ENCODE measurements at regions of chr5 and their contacts with region 1.

Region 1: GRCh38 chr5:16666883-16667398 is 50.1 kb upstream of the RETREG1 start:
- DNase-seq: peak; percentile 36
- H3K4me3 Mint-ChIP-seq: no peak overlapping the region
- H3K27ac Mint-ChIP-seq: no peak overlapping the region
- H3K4me1 Mint-ChIP-seq: no peaks in the 10 kb centered on the region
- H3K27me3 Mint-ChIP-seq: no peaks in the 10 kb centered on the region
- CTCF ChIP-seq: peak; percentile 34

Region 2: DNA sequence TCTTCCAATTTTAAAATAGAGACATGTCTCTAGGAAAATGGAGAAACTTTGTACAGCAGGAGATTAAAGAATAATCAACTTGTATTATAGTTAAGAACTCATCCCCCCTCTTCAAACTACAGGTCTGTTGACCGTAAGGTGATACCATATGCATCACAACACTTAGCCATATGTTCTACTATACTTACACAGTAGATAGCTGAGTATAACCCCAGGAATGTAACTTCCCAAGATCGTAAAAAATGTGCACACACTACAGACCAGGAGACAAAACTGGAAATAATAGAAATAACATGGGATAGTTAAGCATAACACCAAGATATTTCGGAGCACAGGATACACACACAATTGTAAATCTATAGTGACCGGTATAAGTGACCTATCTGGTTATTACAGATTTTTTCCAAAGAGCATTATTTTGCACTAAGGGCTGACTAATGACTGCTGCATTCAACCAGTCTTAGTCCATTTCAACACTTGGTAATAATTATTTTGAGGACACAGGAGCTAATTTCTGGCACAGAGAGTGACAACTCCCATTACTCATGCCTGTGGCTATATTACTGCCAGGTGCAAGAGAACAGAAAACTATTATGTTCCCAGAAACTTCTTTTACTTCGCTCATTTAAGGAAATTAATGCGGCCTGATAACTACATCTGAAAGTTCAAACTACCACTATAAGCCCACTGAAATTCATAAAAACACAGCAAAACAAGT is 186.0 kb before region 1 on chr5:
- CTCF ChIA-PET with region 1: interaction called, 22 read pairs
- POLR2A ChIA-PET with region 1: no interaction called
- intact Hi-C with region 1: no loop called
- DNase-seq: no peak
- H3K4me3 Mint-ChIP-seq: no peak overlapping the region
- H3K27ac Mint-ChIP-seq: no peak overlapping the region
- H3K4me1 Mint-ChIP-seq: peaks cover 12% of the 10 kb centered on the region
- H3K27me3 Mint-ChIP-seq: no peaks in the 10 kb centered on the region
- CTCF ChIP-seq: no peak

Region 3: DNA sequence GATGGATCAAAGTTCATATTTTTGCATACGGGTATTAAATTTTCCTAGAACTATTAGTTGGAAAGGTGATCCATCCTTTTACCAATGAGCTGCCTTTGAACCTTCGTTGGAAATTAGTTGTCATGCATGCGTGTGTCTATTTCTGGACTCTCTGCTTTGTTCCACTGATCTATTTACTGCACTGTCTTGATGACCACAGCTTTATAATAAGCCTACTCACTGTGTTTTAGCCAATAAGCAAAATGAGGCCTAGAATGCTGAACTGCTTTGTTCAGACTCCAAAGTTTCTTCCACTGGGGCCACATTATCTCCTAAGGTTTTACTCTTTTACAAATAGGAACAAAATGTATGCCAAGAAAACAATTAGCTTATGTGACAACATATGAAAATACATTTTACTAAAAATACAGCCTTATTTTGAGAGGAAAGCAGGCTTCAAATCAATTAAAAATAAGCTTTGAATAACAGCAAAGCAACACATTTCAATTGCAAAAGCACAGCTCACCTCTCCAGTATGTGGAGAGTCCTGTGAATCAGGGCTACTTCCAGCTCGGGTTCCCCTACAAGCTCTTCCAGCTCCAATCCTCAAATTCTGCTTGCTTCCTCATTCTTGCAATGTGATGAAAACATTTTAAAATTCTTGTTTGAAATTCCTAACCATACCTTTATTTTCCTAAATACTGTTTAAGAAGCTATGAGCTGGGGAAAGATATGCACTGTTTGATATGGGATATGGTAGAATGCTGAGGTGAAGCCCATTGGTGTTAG is 122.2 kb before region 1 on chr5:
- CTCF ChIA-PET with region 1: interaction called, 10 read pairs
- POLR2A ChIA-PET with region 1: no interaction called
- intact Hi-C with region 1: no loop called
- DNase-seq: no peak
- H3K4me3 Mint-ChIP-seq: no peak overlapping the region
- H3K27ac Mint-ChIP-seq: no peak overlapping the region
- H3K4me1 Mint-ChIP-seq: peaks cover 9% of the 10 kb centered on the region
- H3K27me3 Mint-ChIP-seq: no peaks in the 10 kb centered on the region
- CTCF ChIP-seq: no peak

Region 4: GRCh38 chr5:16656561-16657191 is 10.3 kb before region 1 on chr5:
- CTCF ChIA-PET with region 1: interaction called, 30 read pairs
- POLR2A ChIA-PET with region 1: no interaction called
- intact Hi-C with region 1: no loop called
- DNase-seq: peak; percentile 86
- H3K4me3 Mint-ChIP-seq: peak overlapping the region; percentile 30
- H3K27ac Mint-ChIP-seq: peak overlapping the region; percentile 89
- H3K4me1 Mint-ChIP-seq: peaks cover 18% of the 10 kb centered on the region
- H3K27me3 Mint-ChIP-seq: no peaks in the 10 kb centered on the region
- CTCF ChIP-seq: no peak

Region 5: DNA sequence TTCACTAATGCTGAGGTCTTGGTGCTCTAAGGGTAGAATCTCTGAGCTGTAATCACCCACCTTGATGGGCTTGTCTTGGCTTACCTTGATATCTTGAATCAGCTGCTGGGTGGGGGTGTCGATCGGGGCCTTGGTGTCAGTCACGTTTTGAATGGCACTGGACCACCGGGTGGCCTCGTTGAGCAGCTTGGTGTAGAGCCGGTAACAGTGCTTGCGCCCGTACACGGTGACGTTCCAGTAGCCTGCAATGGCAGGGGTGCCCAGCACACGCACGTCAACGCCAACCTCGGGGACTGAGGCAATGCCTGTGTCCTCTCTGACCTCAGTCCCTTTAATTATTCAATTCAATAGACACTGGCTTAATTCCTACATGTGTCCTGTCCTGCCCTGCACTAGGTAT is 12.9 kb after region 1 on chr5:
- CTCF ChIA-PET with region 1: interaction called, 13 read pairs
- POLR2A ChIA-PET with region 1: no interaction called
- intact Hi-C with region 1: no loop called
- DNase-seq: no peak
- H3K4me3 Mint-ChIP-seq: no peak overlapping the region
- H3K27ac Mint-ChIP-seq: no peak overlapping the region
- H3K4me1 Mint-ChIP-seq: peaks cover 4% of the 10 kb centered on the region
- H3K27me3 Mint-ChIP-seq: no peaks in the 10 kb centered on the region
- CTCF ChIP-seq: no peak

Region 6: GRCh38 chr5:16894236-16895057 is 227.5 kb after region 1 on chr5:
- CTCF ChIA-PET with region 1: no interaction called
- POLR2A ChIA-PET with region 1: no interaction called
- intact Hi-C with region 1: no loop called
- DNase-seq: peak; percentile 96
- H3K4me3 Mint-ChIP-seq: peak overlapping the region; percentile 38
- H3K27ac Mint-ChIP-seq: peak overlapping the region; percentile 74
- H3K4me1 Mint-ChIP-seq: peaks cover 45% of the 10 kb centered on the region
- H3K27me3 Mint-ChIP-seq: no peaks in the 10 kb centered on the region
- CTCF ChIP-seq: no peak